PC-9 (cell line): ENCODE measurements at regions of chr17 and their contacts with region 1.

Region 1: GRCh38 chr17:68785565-68786524 is 169.3 kb downstream of the ABCA8 start:
- DNase-seq: no peak
- H3K4me3 ChIP-seq: no peak overlapping the region
- H3K27ac ChIP-seq: no peak overlapping the region
- H3K4me1 ChIP-seq: peaks cover 8% of the 10 kb centered on the region
- H3K27me3 ChIP-seq: no peaks in the 10 kb centered on the region
- CTCF ChIP-seq: no peak

Region 2: GRCh38 chr17:68707031-68707430 is 78.8 kb before region 1 on chr17:
- CTCF ChIA-PET with region 1: interaction called, 21 read pairs
- POLR2A ChIA-PET with region 1: no interaction called
- intact Hi-C with region 1: no loop called
- DNase-seq: no peak
- H3K4me3 ChIP-seq: no peak overlapping the region
- H3K27ac ChIP-seq: no peak overlapping the region
- H3K4me1 ChIP-seq: no peaks in the 10 kb centered on the region
- H3K27me3 ChIP-seq: peaks cover 57% of the 10 kb centered on the region
- CTCF ChIP-seq: no peak